Natural killer cell (primary cell): ENCODE measurements at regions of chr12 and their contacts with region 1.

Region 1: DNA sequence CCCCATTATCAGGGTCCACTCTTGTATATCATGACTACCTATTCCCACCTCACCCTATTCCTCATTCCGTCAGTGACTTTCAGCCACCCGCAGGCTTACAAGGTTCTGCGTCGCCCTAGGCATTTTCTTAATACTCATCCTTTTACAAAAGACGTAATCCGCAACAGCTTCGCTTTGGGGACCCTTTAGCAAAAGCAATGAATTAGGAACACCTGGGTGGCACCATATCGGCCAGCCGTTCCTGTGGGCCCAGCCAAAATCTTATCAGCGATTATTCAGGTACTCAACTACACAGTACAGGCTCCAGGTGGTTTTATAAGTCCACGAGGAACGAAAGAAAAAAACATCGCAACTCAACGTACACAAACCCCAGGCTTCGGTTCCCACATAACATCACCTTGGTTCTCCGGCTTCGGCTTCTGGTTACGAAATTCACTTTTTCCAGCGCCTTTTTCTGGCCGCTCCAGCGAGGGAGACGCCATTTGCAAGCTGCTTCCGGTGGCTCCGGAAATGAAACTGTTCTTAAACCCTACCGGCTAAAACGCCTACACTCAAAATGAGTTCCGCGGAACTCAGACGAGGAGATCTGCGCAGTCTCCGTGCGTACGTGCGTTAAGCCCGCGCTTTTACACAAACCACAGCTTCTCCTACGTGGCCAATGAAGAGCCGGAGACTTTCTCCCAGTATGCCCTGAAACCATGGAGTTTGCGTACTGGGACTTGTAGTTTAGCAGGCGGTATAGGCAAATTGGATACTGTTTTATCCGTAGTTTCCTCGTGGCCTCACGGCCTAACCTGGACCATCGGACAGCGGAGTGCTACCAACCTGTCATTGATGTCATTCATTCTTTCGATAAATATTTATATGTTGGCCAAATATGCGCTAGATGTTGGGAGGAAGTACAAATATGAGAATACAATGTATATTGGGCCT is at the start of gene KRR1:
- DNase-seq: peak; percentile 75 to 98
- ATAC-seq: peak; percentile 96 to 97 (median 96)
- H3K4me3 ChIP-seq: peak within 1 kb of the TSS; percentile 81
- H3K4me3 Mint-ChIP-seq: peak within 1 kb of the TSS; percentile 99
- H3K27ac ChIP-seq: peak within 1 kb of the TSS; percentile 80
- H3K27ac Mint-ChIP-seq: peak within 1 kb of the TSS; percentile 98
- H3K4me1 ChIP-seq: peaks cover 4% of the 10 kb centered on the region
- H3K4me1 Mint-ChIP-seq: peaks cover 22 to 30% of the 10 kb centered on the region in 2 donors
- H3K27me3 ChIP-seq: peaks cover 2% of the 10 kb centered on the region
- H3K27me3 Mint-ChIP-seq: no peaks in the 10 kb centered on the region
- CTCF ChIP-seq: no peak
- total RNA-seq, gene KRR1: 101 to 112 (median 106) TPM

Region 2: GRCh38 chr12:75135026-75135425 is 376.4 kb before region 1 on chr12:
- intact Hi-C with region 1: no loop called
- DNase-seq: no peak
- ATAC-seq: no peak
- H3K4me3 ChIP-seq: no peak overlapping the region
- H3K4me3 Mint-ChIP-seq: no peak overlapping the region
- H3K27ac ChIP-seq: no peak overlapping the region
- H3K27ac Mint-ChIP-seq: no peak overlapping the region
- H3K4me1 ChIP-seq: no peaks in the 10 kb centered on the region
- H3K4me1 Mint-ChIP-seq: no peaks in the 10 kb centered on the region
- H3K27me3 ChIP-seq: no peaks in the 10 kb centered on the region
- H3K27me3 Mint-ChIP-seq: no peaks in the 10 kb centered on the region
- CTCF ChIP-seq: no peak

Region 3: GRCh38 chr12:75390899-75391538 is 120.4 kb before region 1 on chr12 and contains the start of gene GLIPR1L2:
- intact Hi-C with region 1: loop called (anchors 1 kb)
- DNase-seq: peak; percentile 79 to 95
- ATAC-seq: peak; percentile 91 to 97 (median 96)
- H3K4me3 ChIP-seq: peak within 1 kb of the TSS; percentile 70
- H3K4me3 Mint-ChIP-seq: peak within 1 kb of the TSS; percentile 92
- H3K27ac ChIP-seq: peak within 1 kb of the TSS; percentile 87
- H3K27ac Mint-ChIP-seq: peak within 1 kb of the TSS; percentile 92 to 94
- H3K4me1 ChIP-seq: peaks cover 4% of the 10 kb centered on the region
- H3K4me1 Mint-ChIP-seq: peaks cover 43 to 45% of the 10 kb centered on the region in 2 donors
- H3K27me3 ChIP-seq: no peaks in the 10 kb centered on the region
- H3K27me3 Mint-ChIP-seq: peaks cover 0 to 3% of the 10 kb centered on the region in 2 donors
- CTCF ChIP-seq: peak; percentile 69
- total RNA-seq, gene GLIPR1L2: 0.75 to 1.7 (median 1.6) TPM

Region 4: DNA sequence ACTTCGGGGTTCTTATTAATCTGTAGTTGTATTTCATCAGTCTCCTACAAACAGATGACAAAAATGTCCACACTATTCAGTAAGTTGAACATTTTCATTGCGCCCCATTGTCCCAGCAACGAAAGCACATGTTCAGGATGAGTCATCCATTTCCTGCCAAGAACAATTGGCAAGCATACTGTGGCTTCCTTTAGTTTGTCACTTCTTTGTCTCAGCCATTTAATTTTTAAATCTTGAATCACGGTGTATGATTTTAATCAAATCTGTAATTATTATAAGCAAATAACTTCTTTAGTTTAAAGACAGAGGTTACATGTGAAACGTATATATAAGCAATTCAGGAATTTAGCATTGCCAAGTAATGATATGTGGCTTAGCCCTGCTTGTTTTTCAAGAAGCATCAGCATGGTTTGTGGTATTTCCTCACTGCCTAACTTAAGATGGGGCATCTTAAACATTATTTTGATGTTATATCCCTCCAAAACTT is 211.4 kb after region 1 on chr12:
- intact Hi-C with region 1: loop called (anchors 10 kb)
- DNase-seq: peak in 1 of 2 donors; percentile 60
- ATAC-seq: peak; percentile 71 to 94 (median 87)
- H3K4me3 ChIP-seq: no peak overlapping the region
- H3K4me3 Mint-ChIP-seq: peak overlapping the region; percentile 5
- H3K27ac ChIP-seq: no peak overlapping the region
- H3K27ac Mint-ChIP-seq: peak overlapping the region; percentile 11 to 81
- H3K4me1 ChIP-seq: no peaks in the 10 kb centered on the region
- H3K4me1 Mint-ChIP-seq: peaks cover 13 to 15% of the 10 kb centered on the region in 2 donors
- H3K27me3 ChIP-seq: no peaks in the 10 kb centered on the region
- H3K27me3 Mint-ChIP-seq: peaks cover 2 to 5% of the 10 kb centered on the region in 2 donors
- CTCF ChIP-seq: no peak